Activated CD4-positive, alpha-beta memory T cell treated with anti-CD3 and anti-CD28 coated beads for 36 hours (primary cell): ENCODE measurements at regions of chr11 and their contacts with region 1.

Region 1: GRCh38 chr11:43358801-43359421 is at the start of gene TTC17:
- DNase-seq: peak; percentile 96
- H3K4me3 Mint-ChIP-seq: peak within 1 kb of the TSS; percentile 89
- H3K27ac Mint-ChIP-seq: peak within 1 kb of the TSS; percentile 95
- H3K4me1 Mint-ChIP-seq: peaks cover 44% of the 10 kb centered on the region
- H3K27me3 Mint-ChIP-seq: no peaks in the 10 kb centered on the region
- total RNA-seq, gene TTC17: 51.5 to 52.0 TPM

Region 2: GRCh38 chr11:43119275-43119960 is 239.5 kb before region 1 on chr11:
- CTCF ChIA-PET with region 1: no interaction called
- POLR2A ChIA-PET with region 1: no interaction called
- intact Hi-C with region 1: no loop called
- DNase-seq: no peak
- H3K4me3 Mint-ChIP-seq: no peak overlapping the region
- H3K27ac Mint-ChIP-seq: no peak overlapping the region
- H3K4me1 Mint-ChIP-seq: no peaks in the 10 kb centered on the region
- H3K27me3 Mint-ChIP-seq: no peaks in the 10 kb centered on the region

Region 3: GRCh38 chr11:43341159-43341558 is 17.8 kb before region 1 on chr11:
- CTCF ChIA-PET with region 1: no interaction called
- POLR2A ChIA-PET with region 1: no interaction called
- intact Hi-C with region 1: loop called (anchors 2 kb)
- DNase-seq: no peak
- H3K4me3 Mint-ChIP-seq: no peak overlapping the region
- H3K27ac Mint-ChIP-seq: no peak overlapping the region
- H3K4me1 Mint-ChIP-seq: no peaks in the 10 kb centered on the region
- H3K27me3 Mint-ChIP-seq: no peaks in the 10 kb centered on the region

Region 4: DNA sequence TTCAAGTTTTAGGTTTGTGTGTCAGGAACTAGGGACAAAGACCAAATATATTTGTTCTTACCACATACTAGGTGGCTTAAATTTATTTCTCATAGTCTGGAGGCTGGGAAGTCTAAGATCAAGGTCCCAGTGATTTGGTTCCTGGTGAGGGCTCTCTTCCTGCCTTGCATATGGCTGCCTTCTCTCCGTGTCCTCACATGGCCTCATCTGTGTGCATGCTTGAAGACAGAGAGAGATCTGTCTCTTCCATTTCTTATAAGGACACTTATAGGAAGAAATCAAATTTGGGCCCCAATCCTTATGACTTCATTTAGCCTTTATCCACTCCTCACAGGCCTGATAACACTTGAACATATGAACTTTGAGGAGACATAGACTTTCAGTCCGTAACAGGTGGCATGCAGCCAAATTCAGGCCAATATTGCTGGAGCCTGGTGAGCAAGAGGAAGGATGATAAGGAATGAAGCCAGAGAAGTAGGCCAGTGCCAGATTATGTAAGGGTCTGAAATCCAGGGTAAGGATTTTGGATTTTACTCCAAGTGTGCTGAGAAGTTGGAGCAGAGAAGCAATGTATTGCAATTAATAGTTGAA is 34.9 kb after region 1 on chr11:
- CTCF ChIA-PET with region 1: no interaction called
- POLR2A ChIA-PET with region 1: interaction called, 6 read pairs
- intact Hi-C with region 1: loop called (anchors 2 kb)
- DNase-seq: no peak
- H3K4me3 Mint-ChIP-seq: no peak overlapping the region
- H3K27ac Mint-ChIP-seq: no peak overlapping the region
- H3K4me1 Mint-ChIP-seq: peaks cover 31% of the 10 kb centered on the region
- H3K27me3 Mint-ChIP-seq: no peaks in the 10 kb centered on the region

Region 5: GRCh38 chr11:43419460-43419859 is 60.5 kb after region 1 on chr11:
- CTCF ChIA-PET with region 1: interaction called, 11 read pairs
- POLR2A ChIA-PET with region 1: no interaction called
- intact Hi-C with region 1: loop called (anchors 2 kb)
- DNase-seq: peak; percentile 13
- H3K4me3 Mint-ChIP-seq: no peak overlapping the region
- H3K27ac Mint-ChIP-seq: no peak overlapping the region
- H3K4me1 Mint-ChIP-seq: no peaks in the 10 kb centered on the region
- H3K27me3 Mint-ChIP-seq: no peaks in the 10 kb centered on the region

Region 6: DNA sequence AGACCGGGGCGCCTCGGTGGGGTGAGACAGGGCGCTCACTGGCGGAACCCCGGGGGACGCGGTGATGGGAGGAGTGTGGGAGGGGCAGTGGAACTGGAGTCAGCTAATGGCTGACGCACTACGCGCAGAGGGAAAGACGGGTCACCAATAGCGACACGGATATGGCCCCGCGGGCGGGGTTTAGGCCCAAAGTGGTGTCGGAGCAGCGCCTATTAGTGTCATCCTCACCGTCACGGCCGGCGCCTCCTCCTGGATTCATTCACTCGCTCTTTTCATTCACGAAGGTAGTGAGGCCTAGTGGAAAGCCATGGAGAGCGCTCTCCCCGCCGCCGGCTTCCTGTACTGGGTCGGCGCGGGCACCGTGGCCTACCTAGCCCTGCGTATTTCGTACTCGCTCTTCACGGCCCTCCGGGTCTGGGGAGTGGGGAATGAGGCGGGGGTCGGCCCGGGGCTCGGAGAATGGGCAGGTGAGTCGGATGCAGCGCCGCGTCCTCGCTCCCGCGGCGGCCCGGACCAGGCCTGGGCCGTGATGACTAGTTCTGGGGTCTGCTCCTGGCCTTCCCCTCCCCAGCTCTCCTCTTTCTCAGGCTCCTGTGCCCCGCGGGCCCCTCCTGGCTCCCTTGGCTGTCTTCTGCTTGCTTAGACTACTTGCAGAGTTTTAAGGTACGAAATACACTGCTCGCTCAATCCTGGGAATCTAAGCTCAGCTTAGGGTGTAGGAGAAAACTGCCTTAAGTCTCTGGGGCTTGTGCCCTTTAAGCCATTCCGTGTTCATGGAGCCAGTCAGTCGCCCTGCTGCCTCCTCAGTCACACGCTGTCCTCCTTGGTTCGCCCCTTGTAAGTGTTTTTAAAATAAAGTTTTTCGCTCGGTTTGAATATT is 321.9 kb after region 1 on chr11 and contains the start of gene HSD17B12:
- CTCF ChIA-PET with region 1: no interaction called
- POLR2A ChIA-PET with region 1: interaction called, 7 read pairs
- intact Hi-C with region 1: loop called (anchors 2 kb)
- DNase-seq: peak; percentile 100
- H3K4me3 Mint-ChIP-seq: peak within 1 kb of the TSS; percentile 92
- H3K27ac Mint-ChIP-seq: peak within 1 kb of the TSS; percentile 94
- H3K4me1 Mint-ChIP-seq: peaks cover 33% of the 10 kb centered on the region
- H3K27me3 Mint-ChIP-seq: no peaks in the 10 kb centered on the region
- total RNA-seq, gene HSD17B12: 32.8 to 35.3 TPM